Activated naive CD4-positive, alpha-beta T cell treated with anti-CD3 and anti-CD28 coated beads for 36 hours (primary cell): ENCODE measurements at regions of chr16 and their contacts with region 1.

Region 1: DNA sequence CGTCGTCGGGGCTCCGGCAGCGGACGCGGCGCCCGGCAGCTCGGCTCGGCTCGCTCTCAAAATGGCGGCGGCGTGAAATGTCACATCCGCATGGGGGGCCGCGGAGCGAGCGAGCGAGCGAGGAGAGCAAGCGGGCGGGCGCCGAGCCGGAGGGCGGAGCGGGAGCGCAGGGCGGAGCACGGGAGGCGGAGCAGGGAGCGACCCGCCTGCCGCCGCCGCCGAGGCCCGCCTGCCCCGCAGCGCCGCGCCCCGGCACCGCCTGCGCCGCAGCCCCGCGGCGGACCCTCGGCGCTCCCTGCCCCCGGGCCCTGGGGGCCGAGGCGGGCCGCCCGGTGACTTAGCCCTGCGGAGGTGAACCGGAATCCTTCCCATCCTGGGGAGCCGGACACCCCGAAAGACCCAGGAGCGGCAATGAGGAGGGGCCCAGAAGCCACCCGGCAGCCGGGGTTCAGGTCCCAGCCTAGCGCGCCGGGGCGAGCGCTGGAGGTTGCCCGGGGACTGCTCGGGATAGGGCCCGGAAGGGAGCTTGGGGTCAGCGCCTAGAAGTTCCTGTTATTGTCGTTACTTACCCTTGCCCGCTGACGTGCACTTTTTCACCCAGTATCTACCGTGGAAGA is at the start of gene USP7:
- DNase-seq: peak; percentile 94
- H3K4me3 Mint-ChIP-seq: peak within 1 kb of the TSS; percentile 86
- H3K27ac Mint-ChIP-seq: peak within 1 kb of the TSS; percentile 88
- H3K4me1 Mint-ChIP-seq: peaks cover 38% of the 10 kb centered on the region
- H3K27me3 Mint-ChIP-seq: peaks cover 3% of the 10 kb centered on the region
- total RNA-seq, gene USP7: 155 to 163 TPM

Region 2: GRCh38 chr16:8694795-8695728 is 268.9 kb before region 1 on chr16:
- CTCF ChIA-PET with region 1: no interaction called
- intact Hi-C with region 1: no loop called
- DNase-seq: no peak
- H3K4me3 Mint-ChIP-seq: no peak overlapping the region
- H3K27ac Mint-ChIP-seq: no peak overlapping the region
- H3K4me1 Mint-ChIP-seq: no peaks in the 10 kb centered on the region
- H3K27me3 Mint-ChIP-seq: no peaks in the 10 kb centered on the region

Region 3: DNA sequence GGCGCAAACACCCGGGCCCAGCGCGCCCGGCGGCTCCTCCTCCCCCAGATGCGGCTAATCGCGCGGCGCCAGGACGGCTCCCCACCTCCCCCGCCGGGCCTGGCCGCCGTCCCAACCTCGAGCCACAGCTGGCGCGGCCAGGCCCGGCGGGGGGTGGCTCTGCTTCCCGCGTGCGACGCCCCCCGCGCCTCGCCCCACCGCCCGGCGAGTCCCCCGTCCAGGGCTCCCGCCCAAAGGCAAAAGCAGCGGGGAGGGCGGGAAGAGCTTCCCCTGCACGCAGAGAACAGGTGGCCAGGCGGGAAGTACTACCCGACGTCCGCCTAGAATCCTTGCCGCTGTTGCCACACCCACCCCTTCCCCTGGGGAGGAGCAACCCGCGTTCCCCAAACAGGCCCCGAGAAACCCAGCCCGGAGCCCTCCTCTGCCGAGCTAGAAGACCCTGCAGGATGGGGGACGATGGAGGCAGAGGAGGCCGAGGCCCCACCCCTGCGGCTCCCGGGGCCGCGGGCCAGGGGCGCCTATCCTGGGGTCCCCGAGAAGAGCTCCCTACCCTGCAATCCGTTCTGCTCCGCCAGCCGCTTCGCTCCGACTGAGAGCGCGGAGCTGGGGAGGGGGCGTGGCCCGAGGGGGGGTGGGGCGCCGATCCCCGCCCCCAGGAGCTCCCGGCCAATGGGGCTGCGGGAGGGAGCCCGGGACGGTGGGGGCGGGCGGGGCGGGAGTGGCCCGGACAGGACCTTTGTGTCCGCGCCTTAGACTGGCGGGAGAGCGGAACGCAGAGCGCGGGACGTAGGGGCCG is 95.3 kb before region 1 on chr16 and contains the start of gene CARHSP1:
- CTCF ChIA-PET with region 1: no interaction called
- intact Hi-C with region 1: loop called (anchors 2 kb)
- DNase-seq: peak; percentile 81
- H3K4me3 Mint-ChIP-seq: peak within 1 kb of the TSS; percentile 89
- H3K27ac Mint-ChIP-seq: peak within 1 kb of the TSS; percentile 83
- H3K4me1 Mint-ChIP-seq: peaks cover 36% of the 10 kb centered on the region
- H3K27me3 Mint-ChIP-seq: no peaks in the 10 kb centered on the region
- total RNA-seq, gene CARHSP1: 46.5 to 49.6 TPM

Region 4: GRCh38 chr16:9008601-9009260 is 44.8 kb after region 1 on chr16:
- CTCF ChIA-PET with region 1: interaction called, 3 read pairs
- intact Hi-C with region 1: loop called (anchors 5 kb)
- DNase-seq: peak; percentile 78
- H3K4me3 Mint-ChIP-seq: no peak overlapping the region
- H3K27ac Mint-ChIP-seq: no peak overlapping the region
- H3K4me1 Mint-ChIP-seq: peaks cover 4% of the 10 kb centered on the region
- H3K27me3 Mint-ChIP-seq: peaks cover 9% of the 10 kb centered on the region

Region 5: GRCh38 chr16:9124908-9125584 is 161.1 kb after region 1 on chr16:
- CTCF ChIA-PET with region 1: no interaction called
- intact Hi-C with region 1: loop called (anchors 2 kb)
- DNase-seq: no peak
- H3K4me3 Mint-ChIP-seq: no peak overlapping the region
- H3K27ac Mint-ChIP-seq: peak overlapping the region; percentile 64
- H3K4me1 Mint-ChIP-seq: peaks cover 61% of the 10 kb centered on the region
- H3K27me3 Mint-ChIP-seq: no peaks in the 10 kb centered on the region